ENCODE measurements at regions of chr16 and their contacts with region 1.

Region 1: GRCh38 chr16:50598256-50598894 is 50.2 kb downstream of the NKD1 start:
- DNase-seq: peak; percentile 59 to 78 (median 64)
- ATAC-seq: peak; percentile 58
- H3K4me3 ChIP-seq: no peak overlapping the region
- H3K27ac ChIP-seq: no peak overlapping the region
- H3K4me1 ChIP-seq: peaks cover 8% of the 10 kb centered on the region
- H3K27me3 ChIP-seq: no peaks in the 10 kb centered on the region
- CTCF ChIP-seq: no peak
- POLR2A ChIP-seq: no peak

Region 2: DNA sequence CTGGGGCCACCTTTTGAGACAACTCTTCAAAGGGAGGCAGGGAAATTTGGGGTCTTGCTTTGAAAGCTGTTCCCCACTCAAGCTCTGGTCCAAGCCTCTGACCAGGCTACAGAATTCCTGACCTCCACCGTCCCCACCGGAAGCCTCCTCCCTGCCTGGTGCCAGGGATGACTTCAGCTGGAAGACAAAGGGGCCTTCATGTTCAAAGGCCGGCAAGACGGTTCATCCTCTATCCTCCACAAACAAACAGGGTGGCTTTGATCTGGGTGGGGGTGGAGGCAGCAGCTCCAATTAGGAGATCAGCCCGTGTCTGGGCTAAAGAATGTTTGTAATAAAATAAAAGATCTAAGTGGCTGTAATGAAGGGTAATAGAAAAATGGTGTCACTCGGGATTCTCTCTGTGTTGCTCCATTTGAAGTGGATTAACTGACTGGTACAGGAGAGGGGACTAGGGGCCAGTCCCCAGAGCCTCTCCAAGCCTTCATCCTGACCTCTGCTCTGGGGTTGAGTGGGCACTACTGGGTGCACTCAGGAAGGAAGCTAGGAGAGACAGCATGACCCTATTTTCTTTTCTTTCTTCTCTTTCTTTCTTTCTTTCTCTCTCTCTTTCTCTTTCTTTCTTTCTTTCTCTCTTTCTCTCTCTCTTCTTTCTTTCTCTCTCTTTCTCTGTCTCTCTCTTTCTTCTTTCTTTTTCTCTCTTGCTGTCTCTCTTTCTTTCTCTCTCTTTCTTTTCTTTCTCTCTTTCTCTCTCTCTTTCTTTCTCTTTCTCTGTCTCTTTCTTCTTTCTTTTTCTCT is 77.7 kb before region 1 on chr16:
- intact Hi-C with region 1: no loop called
- DNase-seq: no peak
- ATAC-seq: no peak
- H3K4me3 ChIP-seq: no peak overlapping the region
- H3K27ac ChIP-seq: no peak overlapping the region
- H3K4me1 ChIP-seq: no peaks in the 10 kb centered on the region
- H3K27me3 ChIP-seq: no peaks in the 10 kb centered on the region
- CTCF ChIP-seq: no peak
- POLR2A ChIP-seq: no peak

Region 3: DNA sequence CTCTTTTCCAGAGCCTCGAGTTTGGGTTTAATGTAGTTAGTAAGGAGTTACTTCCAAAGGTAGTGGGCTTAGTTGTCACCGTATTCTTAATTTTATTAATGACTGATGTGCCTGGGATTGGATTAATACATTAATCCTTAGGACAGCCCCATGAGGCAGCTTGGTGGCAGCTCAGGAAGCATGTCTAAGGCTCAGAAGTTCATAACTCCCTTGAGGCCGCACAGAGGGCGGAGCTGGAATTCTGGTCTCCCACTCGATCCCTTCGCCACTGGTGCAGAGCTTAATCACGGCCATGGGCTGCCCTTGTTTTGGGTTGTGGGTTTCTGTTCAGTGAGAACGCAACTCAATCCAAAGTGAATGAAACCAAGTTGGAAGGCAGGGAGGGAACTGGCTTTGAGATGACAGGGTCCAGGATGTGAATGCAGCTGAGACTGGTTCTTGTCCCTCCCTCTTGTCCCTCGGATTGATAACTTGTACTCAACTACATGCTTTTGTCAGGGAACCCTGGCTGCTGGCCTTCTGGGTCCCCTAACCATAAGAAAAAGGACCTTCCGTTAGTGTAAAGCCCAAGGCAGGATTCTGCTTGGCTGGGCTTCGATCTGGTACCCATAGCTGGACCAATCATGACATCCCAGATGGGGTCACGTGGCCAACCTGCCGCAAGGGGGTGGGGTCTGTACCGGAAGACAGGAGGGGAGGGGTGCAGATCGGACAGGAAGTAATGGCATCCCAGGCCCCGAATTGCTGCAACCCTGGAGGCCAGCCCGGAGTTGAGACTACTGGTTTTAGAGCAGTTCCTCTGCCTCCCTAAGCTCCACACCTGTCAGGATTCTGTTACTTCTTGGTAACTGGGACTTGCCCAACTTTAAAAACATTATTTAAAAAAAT is 37.4 kb after region 1 on chr16:
- intact Hi-C with region 1: loop called (anchors 5 kb)
- DNase-seq: no peak
- ATAC-seq: no peak
- H3K4me3 ChIP-seq: no peak overlapping the region
- H3K27ac ChIP-seq: no peak overlapping the region
- H3K4me1 ChIP-seq: no peaks in the 10 kb centered on the region
- H3K27me3 ChIP-seq: no peaks in the 10 kb centered on the region
- CTCF ChIP-seq: no peak
- POLR2A ChIP-seq: no peak

Region 4: GRCh38 chr16:50841081-50841886 is 242.9 kb after region 1 on chr16:
- intact Hi-C with region 1: no loop called
- DNase-seq: peak in 3 of 4 donors; percentile 6 to 34 (median 21)
- ATAC-seq: no peak
- H3K4me3 ChIP-seq: no peak overlapping the region
- H3K27ac ChIP-seq: no peak overlapping the region
- H3K4me1 ChIP-seq: peaks cover 19% of the 10 kb centered on the region
- H3K27me3 ChIP-seq: no peaks in the 10 kb centered on the region
- CTCF ChIP-seq: no peak
- POLR2A ChIP-seq: no peak

Measured in body of pancreas (tissue), 4 donors.